ENCODE measurements at regions of chr3 and their contacts with region 1.

Region 1: GRCh38 chr3:108406661-108407206 is 103.7 kb downstream of the MYH15 start:
- DNase-seq: no peak
- H3K4me3 Mint-ChIP-seq: no peak overlapping the region
- H3K27ac Mint-ChIP-seq: no peak overlapping the region
- H3K4me1 Mint-ChIP-seq: peaks cover 7% of the 10 kb centered on the region
- H3K27me3 Mint-ChIP-seq: peaks cover 5% of the 10 kb centered on the region

Region 2: GRCh38 chr3:108153451-108153981 is 253.2 kb before region 1 on chr3:
- intact Hi-C with region 1: loop called (anchors 1 kb)
- DNase-seq: peak; percentile 38
- H3K4me3 Mint-ChIP-seq: no peak overlapping the region
- H3K27ac Mint-ChIP-seq: no peak overlapping the region
- H3K4me1 Mint-ChIP-seq: peaks cover 20% of the 10 kb centered on the region
- H3K27me3 Mint-ChIP-seq: no peaks in the 10 kb centered on the region

Region 3: GRCh38 chr3:108578064-108578463 is 171.3 kb after region 1 on chr3:
- intact Hi-C with region 1: no loop called
- DNase-seq: no peak
- H3K4me3 Mint-ChIP-seq: no peak overlapping the region
- H3K27ac Mint-ChIP-seq: no peak overlapping the region
- H3K4me1 Mint-ChIP-seq: peaks cover 19% of the 10 kb centered on the region
- H3K27me3 Mint-ChIP-seq: no peaks in the 10 kb centered on the region

Measured in activated T-helper 2 cell treated with anti-CD3 and anti-CD28 coated beads, Interferon-gamma antibody, Interleukin-2, Interleukin-4, amounts not matched to agents 10 μg/mL and 5 μg/mL and 100 μg/mL, durations not matched to agents 14 hours and 24 hours and 36 hours (primary cell).